Sigmoid colon (tissue), 7 donors: ENCODE measurements at regions of chr18 and their contacts with region 1.

Region 1: DNA sequence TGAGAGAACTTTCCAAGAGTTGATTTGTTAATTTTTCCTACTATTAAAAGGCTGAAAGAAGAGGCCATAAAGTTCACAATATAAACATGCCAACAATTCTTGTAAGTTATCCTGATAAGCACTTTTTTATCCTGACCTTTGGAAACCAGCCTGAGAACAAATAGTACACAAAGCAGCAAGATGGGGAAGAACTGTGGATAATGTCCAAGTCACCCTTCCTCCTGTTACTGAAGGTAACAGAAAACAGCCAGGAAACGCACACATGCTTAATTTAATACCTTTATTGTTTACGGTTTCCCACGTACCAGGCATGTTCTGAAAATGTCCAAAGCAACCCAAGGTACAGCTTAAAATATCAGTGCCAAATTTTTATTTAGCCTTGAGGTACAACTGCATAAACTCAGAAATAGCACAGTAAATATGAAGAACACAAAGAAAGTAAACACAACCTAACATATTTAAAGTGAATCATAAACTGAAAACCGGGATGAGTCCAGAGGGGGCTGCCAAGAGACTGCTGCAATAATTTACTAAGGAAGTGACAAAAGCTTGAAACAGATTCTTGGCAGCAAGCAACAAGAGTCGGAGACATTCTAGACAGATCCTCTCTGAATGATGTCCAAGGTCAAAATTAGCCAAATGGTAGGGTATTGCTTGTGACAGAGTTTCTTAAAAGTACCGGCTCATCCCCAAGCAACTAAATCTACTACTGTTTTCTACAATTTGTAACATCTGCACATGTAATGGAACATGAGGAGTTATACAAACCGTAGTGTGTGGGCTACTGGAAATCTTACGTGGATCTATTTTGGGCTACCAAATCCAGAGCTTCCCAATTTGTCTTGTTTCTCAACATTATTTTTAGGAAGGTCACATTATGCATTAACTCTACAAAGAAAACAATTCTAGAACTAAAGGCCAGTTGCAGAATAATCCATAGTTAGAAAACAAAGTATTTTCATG is 93.2 kb downstream of the CABYR start:
- DNase-seq: peak; percentile 74
- H3K4me3 ChIP-seq: no peak overlapping the region
- H3K27ac ChIP-seq: peak overlapping the region; percentile 57 to 79 (median 68)
- H3K4me1 ChIP-seq: peaks cover 0 to 56% (median 49%) of the 10 kb centered on the region in 4 donors
- H3K27me3 ChIP-seq: no peaks in the 10 kb centered on the region
- CTCF ChIP-seq: no peak
- EP300 ChIP-seq: peak in 3 of 4 donors; percentile 24 to 56 (median 37)
- POLR2A ChIP-seq: no peak

Region 2: GRCh38 chr18:22710628-22711380 is 1521.2 kb before region 1 on chr18:
- intact Hi-C with region 1: no loop called
- DNase-seq: no peak
- H3K4me3 ChIP-seq: peak overlapping the region in 3 of 4 donors; percentile 37 to 44 (median 39)
- H3K27ac ChIP-seq: peak overlapping the region; percentile 25 to 62 (median 56)
- H3K4me1 ChIP-seq: peaks cover 0 to 36% (median 20%) of the 10 kb centered on the region in 4 donors
- H3K27me3 ChIP-seq: no peaks in the 10 kb centered on the region
- CTCF ChIP-seq: no peak
- EP300 ChIP-seq: no peak
- POLR2A ChIP-seq: no peak

Region 3: DNA sequence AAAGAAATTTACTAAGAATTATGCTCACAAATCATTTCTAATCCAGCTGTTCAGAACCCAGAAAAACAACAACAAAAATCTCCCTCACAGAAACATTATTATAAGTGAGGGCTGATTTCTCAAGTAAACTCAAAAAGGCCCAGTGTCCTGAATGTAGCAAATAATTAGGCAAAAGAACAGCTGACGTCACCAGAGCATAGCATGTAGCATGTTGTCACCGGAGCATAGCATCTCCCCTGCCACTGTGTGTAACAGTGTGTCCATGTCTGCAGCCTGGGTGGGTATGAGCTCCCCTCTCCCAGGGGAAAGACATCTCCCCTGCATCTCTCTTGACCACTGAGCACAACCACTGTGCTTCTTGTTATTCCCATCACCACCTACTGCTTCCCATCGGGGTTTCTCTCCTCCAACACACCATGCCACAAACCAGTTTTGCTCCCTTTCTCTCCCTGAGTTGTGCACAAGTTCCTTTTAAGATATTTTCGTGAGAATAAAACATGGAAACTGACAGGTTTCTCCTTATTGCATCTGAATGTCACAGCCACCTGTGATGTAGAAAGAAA is 33.5 kb after region 1 on chr18:
- intact Hi-C with region 1: loop called (anchors 1 kb)
- DNase-seq: no peak
- H3K4me3 ChIP-seq: no peak overlapping the region
- H3K27ac ChIP-seq: peak overlapping the region; percentile 53 to 94 (median 79)
- H3K4me1 ChIP-seq: peaks cover 0 to 74% (median 46%) of the 10 kb centered on the region in 4 donors
- H3K27me3 ChIP-seq: no peaks in the 10 kb centered on the region
- CTCF ChIP-seq: no peak
- EP300 ChIP-seq: no peak
- POLR2A ChIP-seq: no peak

Region 4: GRCh38 chr18:24306201-24306600 is 74.1 kb after region 1 on chr18:
- intact Hi-C with region 1: no loop called
- DNase-seq: no peak
- H3K4me3 ChIP-seq: no peak overlapping the region
- H3K27ac ChIP-seq: no peak overlapping the region
- H3K4me1 ChIP-seq: no peaks in the 10 kb centered on the region
- H3K27me3 ChIP-seq: no peaks in the 10 kb centered on the region
- CTCF ChIP-seq: no peak
- EP300 ChIP-seq: no peak
- POLR2A ChIP-seq: no peak

Region 5: GRCh38 chr18:24397694-24398365 is 165.8 kb after region 1 on chr18 and contains the start of gene OSBPL1A:
- intact Hi-C with region 1: loop called (anchors 5 kb)
- DNase-seq: peak; percentile 98
- H3K4me3 ChIP-seq: peak within 1 kb of the TSS; percentile 69 to 88 (median 73)
- H3K27ac ChIP-seq: peak within 1 kb of the TSS; percentile 74 to 91 (median 86)
- H3K4me1 ChIP-seq: peaks cover 0 to 13% (median 9%) of the 10 kb centered on the region in 4 donors
- H3K27me3 ChIP-seq: no peaks in the 10 kb centered on the region
- CTCF ChIP-seq: no peak
- EP300 ChIP-seq: peak in 1 of 4 donors; percentile 10
- POLR2A ChIP-seq: no peak
- total RNA-seq, gene OSBPL1A: 71.3 to 110 (median 94.6) TPM